Heart right ventricle (tissue), 16 donors: ENCODE measurements at regions of chr6 and their contacts with region 1.

Region 1: GRCh38 chr6:22025468-22026160 is 271.2 kb downstream of the PRL start:
- DNase-seq: peak in 1 of 2 donors; percentile 16
- ATAC-seq: peak in 7 of 8 donors; percentile 56 to 86 (median 77)
- H3K4me3 ChIP-seq: peak overlapping the region in 1 of 10 donors; percentile 25
- H3K27ac ChIP-seq: peak overlapping the region in 7 of 10 donors; percentile 23 to 83 (median 42)
- H3K4me1 ChIP-seq: peaks cover 3 to 57% (median 37%) of the 10 kb centered on the region in 9 donors
- H3K27me3 ChIP-seq: no peaks in the 10 kb centered on the region
- CTCF ChIP-seq: no peak

Region 2: DNA sequence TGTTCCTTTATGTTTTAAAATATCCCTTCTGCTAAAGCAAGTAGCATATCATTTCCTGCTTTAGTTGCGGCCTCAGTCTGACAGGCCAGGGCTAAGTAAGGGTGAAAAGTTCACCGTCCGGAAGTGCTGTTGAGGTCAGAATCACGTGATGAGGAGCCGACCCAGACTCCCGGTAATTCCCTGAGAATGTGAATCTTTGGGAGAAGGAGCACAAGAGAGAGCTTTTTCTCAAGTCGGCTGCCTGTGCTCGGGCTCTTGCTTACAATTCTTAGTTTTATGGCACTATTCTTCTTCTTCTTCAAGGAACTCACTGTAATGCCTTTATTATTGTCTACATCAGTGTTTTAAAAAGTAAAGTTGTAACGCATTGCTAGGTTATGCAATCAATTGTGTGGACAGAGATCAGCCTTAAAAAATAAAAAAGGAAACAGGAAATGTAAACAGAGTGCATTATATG is 38.1 kb before region 1 on chr6:
- intact Hi-C with region 1: loop called in 1 of 10 experiments (anchors 5 kb)
- DNase-seq: peak; percentile 43 to 87
- ATAC-seq: peak; percentile 79 to 99 (median 99)
- H3K4me3 ChIP-seq: peak overlapping the region in 4 of 10 donors; percentile 14 to 33 (median 30)
- H3K27ac ChIP-seq: peak overlapping the region in 9 of 10 donors; percentile 51 to 86 (median 76)
- H3K4me1 ChIP-seq: peaks cover 0 to 38% (median 22%) of the 10 kb centered on the region in 9 donors
- H3K27me3 ChIP-seq: no peaks in the 10 kb centered on the region
- CTCF ChIP-seq: no peak

Region 3: DNA sequence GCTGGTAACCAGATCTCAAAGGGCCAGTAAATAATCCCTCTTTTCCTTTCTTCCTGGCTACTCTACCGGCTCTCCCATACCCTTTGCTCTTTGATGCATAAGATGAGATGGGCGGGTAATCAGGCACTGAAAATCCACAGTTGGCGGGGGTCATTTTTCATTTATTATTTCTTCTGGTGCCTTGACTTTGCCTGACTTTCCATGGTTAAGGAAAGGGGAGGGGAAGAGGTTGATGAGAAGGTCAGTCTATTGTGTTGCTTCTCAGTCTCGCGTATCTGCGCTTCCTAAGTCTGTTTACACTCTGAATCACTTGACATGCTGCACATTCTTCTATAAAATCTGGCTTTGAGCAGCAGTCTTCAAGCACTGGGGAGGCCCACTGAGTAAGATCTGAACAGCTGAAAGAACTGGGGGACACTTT is 422.7 kb after region 1 on chr6:
- intact Hi-C with region 1: loop called in 1 of 10 experiments (anchors 10 kb)
- DNase-seq: no peak
- ATAC-seq: peak in 6 of 8 donors; percentile 35 to 68 (median 48)
- H3K4me3 ChIP-seq: no peak overlapping the region
- H3K27ac ChIP-seq: peak overlapping the region in 4 of 10 donors; percentile 8 to 83 (median 68)
- H3K4me1 ChIP-seq: peaks cover 6 to 52% (median 27%) of the 10 kb centered on the region in 9 donors
- H3K27me3 ChIP-seq: no peaks in the 10 kb centered on the region
- CTCF ChIP-seq: no peak